ENCODE measurements at regions of chr20 and their contacts with region 1.

Region 1: GRCh38 chr20:5126512-5127203 is at the start of gene CDS2:
- DNase-seq: peak; percentile 100
- H3K4me3 Mint-ChIP-seq: peak within 1 kb of the TSS; percentile 97
- H3K27ac Mint-ChIP-seq: peak within 1 kb of the TSS; percentile 92
- H3K4me1 Mint-ChIP-seq: peaks cover 56% of the 10 kb centered on the region
- H3K27me3 Mint-ChIP-seq: no peaks in the 10 kb centered on the region
- total RNA-seq, gene CDS2: 67.4 to 68.2 TPM

Region 2: GRCh38 chr20:5141615-5142014 is 15.0 kb after region 1 on chr20:
- CTCF ChIA-PET with region 1: interaction called, 10 read pairs
- POLR2A ChIA-PET with region 1: no interaction called
- DNase-seq: no peak
- H3K4me3 Mint-ChIP-seq: no peak overlapping the region
- H3K27ac Mint-ChIP-seq: no peak overlapping the region
- H3K4me1 Mint-ChIP-seq: peaks cover 17% of the 10 kb centered on the region
- H3K27me3 Mint-ChIP-seq: no peaks in the 10 kb centered on the region

Region 3: GRCh38 chr20:5191829-5192569 is 65.3 kb after region 1 on chr20:
- CTCF ChIA-PET with region 1: interaction called, 141 read pairs
- POLR2A ChIA-PET with region 1: interaction called, 53 read pairs
- DNase-seq: peak; percentile 48
- H3K4me3 Mint-ChIP-seq: no peak overlapping the region
- H3K27ac Mint-ChIP-seq: peak overlapping the region; percentile 60
- H3K4me1 Mint-ChIP-seq: peaks cover 28% of the 10 kb centered on the region
- H3K27me3 Mint-ChIP-seq: no peaks in the 10 kb centered on the region

Region 4: GRCh38 chr20:5222919-5223634 is 96.4 kb after region 1 on chr20:
- CTCF ChIA-PET with region 1: interaction called, 19 read pairs
- POLR2A ChIA-PET with region 1: interaction called, 4 read pairs
- DNase-seq: peak; percentile 67
- H3K4me3 Mint-ChIP-seq: no peak overlapping the region
- H3K27ac Mint-ChIP-seq: no peak overlapping the region
- H3K4me1 Mint-ChIP-seq: no peaks in the 10 kb centered on the region
- H3K27me3 Mint-ChIP-seq: no peaks in the 10 kb centered on the region

Region 5: DNA sequence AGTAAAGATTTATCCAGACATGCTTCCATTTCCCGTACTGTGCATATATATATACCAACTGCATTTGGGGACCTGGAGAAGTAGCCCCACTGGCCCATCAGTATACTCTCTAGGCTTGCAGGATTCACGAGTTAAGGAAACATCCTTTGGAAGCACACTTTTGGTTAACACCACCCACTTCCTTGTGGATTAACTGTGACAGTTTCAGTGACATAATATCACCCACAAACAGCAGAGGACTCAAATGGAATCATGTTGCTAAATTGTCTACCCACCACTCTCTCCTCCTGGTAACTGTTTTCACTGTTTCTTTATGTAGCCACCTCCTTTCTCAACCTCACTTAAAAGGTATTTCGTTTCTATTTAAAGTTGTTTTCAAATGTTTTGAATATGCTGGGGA is 135.1 kb after region 1 on chr20:
- CTCF ChIA-PET with region 1: no interaction called
- POLR2A ChIA-PET with region 1: no interaction called
- DNase-seq: no peak
- H3K4me3 Mint-ChIP-seq: no peak overlapping the region
- H3K27ac Mint-ChIP-seq: no peak overlapping the region
- H3K4me1 Mint-ChIP-seq: no peaks in the 10 kb centered on the region
- H3K27me3 Mint-ChIP-seq: peaks cover 24% of the 10 kb centered on the region